ENCODE measurements at regions of chr6 and their contacts with region 1.

Region 1: DNA sequence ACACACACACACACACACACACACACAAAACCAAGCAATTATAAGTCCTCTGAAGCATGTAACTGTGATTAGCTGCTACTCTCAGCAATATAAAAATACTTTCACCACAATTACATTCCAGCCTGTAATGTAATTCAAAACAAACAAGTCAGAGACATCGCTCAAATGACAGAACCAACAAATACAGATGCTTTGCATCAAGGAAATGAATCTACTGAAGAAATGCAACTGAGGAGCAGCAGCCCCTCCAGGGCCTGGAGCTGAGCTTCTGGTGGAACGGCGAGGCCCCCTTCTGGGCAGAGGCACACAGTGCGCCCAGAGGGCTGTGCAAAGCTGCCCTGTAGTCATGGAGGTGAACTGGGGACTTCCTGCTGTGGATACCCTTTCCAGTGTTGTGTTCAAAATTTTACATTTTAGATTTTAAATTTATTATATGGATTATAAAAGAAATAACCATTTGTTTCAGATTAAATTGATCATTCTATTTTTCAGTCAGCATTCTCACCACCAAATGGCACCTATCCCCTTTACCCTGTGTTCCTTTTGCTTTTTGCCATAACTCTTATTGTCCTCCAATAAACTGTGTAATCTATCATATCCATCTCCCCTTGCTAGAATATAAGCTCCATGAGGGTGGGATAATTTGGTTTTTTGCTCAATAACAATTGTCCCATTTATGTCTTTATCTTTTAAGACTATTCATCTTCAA is 23.2 kb downstream of the ADAT2 start:
- DNase-seq: peak; percentile 78
- H3K4me3 Mint-ChIP-seq: no peak overlapping the region
- H3K27ac Mint-ChIP-seq: no peak overlapping the region
- H3K4me1 Mint-ChIP-seq: peaks cover 6% of the 10 kb centered on the region
- H3K27me3 Mint-ChIP-seq: no peaks in the 10 kb centered on the region

Region 2: GRCh38 chr6:142474531-142475289 is 952.6 kb before region 1 on chr6:
- CTCF ChIA-PET with region 1: interaction called, 25 read pairs
- POLR2A ChIA-PET with region 1: no interaction called
- intact Hi-C with region 1: loop called (anchors 5 kb)
- DNase-seq: no peak
- H3K4me3 Mint-ChIP-seq: no peak overlapping the region
- H3K27ac Mint-ChIP-seq: no peak overlapping the region
- H3K4me1 Mint-ChIP-seq: no peaks in the 10 kb centered on the region
- H3K27me3 Mint-ChIP-seq: peaks cover 2% of the 10 kb centered on the region

Region 3: DNA sequence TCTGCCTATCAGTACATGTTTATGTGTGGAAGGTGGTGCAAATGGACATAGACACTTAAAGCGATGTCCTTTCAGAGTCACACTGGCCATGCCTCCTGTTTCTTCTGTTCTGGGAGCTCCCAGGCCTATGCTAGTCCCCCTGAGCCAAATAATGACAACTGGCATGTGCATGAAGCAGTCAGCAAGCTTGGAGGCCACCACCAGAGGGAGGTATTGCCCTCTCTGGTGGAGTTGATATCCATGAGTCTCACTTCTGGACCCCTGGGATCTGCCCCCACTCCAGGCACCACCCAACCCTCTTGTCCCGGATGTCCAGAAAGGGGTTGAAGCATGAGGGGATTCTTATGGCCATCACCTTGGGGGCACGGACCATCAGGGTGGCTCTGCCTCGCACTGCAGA is 194.4 kb before region 1 on chr6:
- CTCF ChIA-PET with region 1: interaction called, 9 read pairs
- POLR2A ChIA-PET with region 1: no interaction called
- intact Hi-C with region 1: loop called (anchors 1 kb)
- DNase-seq: peak; percentile 46
- H3K4me3 Mint-ChIP-seq: no peak overlapping the region
- H3K27ac Mint-ChIP-seq: no peak overlapping the region
- H3K4me1 Mint-ChIP-seq: no peaks in the 10 kb centered on the region
- H3K27me3 Mint-ChIP-seq: no peaks in the 10 kb centered on the region

Region 4: DNA sequence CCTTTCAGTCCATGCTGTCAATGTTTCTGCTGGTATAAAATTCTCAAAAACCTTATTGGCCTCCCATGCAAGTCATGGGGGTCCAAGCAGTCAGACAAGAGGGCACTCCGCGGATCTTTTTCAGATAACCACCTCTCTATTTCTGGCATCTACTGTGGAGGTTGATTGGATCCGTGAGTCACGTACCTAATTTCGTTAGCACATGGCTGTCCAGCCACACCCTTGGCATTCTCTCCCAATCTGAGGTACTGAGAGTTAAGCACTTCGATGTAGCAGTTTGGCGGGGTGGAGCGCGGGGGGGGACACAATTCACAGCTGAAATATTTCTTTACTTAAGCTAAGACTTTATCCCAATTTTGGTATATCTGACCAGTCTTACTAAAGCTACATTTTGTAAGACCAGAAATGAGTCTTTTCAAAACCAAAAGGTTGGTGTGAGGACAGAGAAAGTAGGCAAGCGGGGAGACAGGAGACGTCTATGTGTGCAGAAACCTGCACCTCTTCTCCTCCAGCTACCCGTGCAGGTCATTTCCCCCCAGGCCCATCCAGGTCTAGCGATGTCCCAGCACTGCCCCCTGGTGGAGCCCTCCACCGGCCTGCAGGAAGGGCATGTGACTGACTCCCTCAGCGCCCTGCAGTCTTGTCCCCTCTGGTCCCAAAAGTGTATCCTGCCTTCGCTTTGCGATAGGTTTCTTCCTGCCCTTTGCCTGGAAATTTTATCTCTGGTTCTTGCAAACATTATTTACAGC is 89.9 kb before region 1 on chr6:
- CTCF ChIA-PET with region 1: interaction called, 10 read pairs
- POLR2A ChIA-PET with region 1: no interaction called
- intact Hi-C with region 1: no loop called
- DNase-seq: peak; percentile 70
- H3K4me3 Mint-ChIP-seq: no peak overlapping the region
- H3K27ac Mint-ChIP-seq: no peak overlapping the region
- H3K4me1 Mint-ChIP-seq: peaks cover 7% of the 10 kb centered on the region
- H3K27me3 Mint-ChIP-seq: no peaks in the 10 kb centered on the region

Region 5: DNA sequence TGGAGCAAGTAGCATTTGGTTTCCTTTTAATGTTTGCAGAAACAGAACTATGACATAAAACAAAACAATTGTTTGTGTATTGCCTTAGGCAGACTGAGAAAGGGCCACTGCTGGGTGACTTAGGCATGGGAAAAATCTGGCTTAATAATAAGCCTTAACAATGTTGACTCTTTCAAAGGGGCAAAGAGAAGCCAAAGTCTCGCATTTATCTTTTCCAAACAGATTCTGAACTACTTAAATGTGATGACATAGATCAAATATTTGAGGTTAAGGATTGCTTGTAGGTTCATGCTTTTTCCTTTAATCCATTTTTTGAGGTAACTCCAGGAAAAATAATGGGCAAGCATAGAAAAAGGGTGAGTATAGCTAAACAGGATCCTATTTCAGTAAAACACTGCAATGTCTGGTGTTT is 16.4 kb before region 1 on chr6:
- CTCF ChIA-PET with region 1: interaction called, 15 read pairs
- POLR2A ChIA-PET with region 1: no interaction called
- intact Hi-C with region 1: no loop called
- DNase-seq: no peak
- H3K4me3 Mint-ChIP-seq: no peak overlapping the region
- H3K27ac Mint-ChIP-seq: no peak overlapping the region
- H3K4me1 Mint-ChIP-seq: no peaks in the 10 kb centered on the region
- H3K27me3 Mint-ChIP-seq: peaks cover 9% of the 10 kb centered on the region

Region 6: GRCh38 chr6:143478479-143479062 is 51.3 kb after region 1 on chr6:
- CTCF ChIA-PET with region 1: no interaction called
- POLR2A ChIA-PET with region 1: no interaction called
- intact Hi-C with region 1: no loop called
- DNase-seq: no peak
- H3K4me3 Mint-ChIP-seq: no peak overlapping the region
- H3K27ac Mint-ChIP-seq: no peak overlapping the region
- H3K4me1 Mint-ChIP-seq: no peaks in the 10 kb centered on the region
- H3K27me3 Mint-ChIP-seq: no peaks in the 10 kb centered on the region